ENCODE measurements at regions of chr3 and their contacts with region 1.

Region 1: DNA sequence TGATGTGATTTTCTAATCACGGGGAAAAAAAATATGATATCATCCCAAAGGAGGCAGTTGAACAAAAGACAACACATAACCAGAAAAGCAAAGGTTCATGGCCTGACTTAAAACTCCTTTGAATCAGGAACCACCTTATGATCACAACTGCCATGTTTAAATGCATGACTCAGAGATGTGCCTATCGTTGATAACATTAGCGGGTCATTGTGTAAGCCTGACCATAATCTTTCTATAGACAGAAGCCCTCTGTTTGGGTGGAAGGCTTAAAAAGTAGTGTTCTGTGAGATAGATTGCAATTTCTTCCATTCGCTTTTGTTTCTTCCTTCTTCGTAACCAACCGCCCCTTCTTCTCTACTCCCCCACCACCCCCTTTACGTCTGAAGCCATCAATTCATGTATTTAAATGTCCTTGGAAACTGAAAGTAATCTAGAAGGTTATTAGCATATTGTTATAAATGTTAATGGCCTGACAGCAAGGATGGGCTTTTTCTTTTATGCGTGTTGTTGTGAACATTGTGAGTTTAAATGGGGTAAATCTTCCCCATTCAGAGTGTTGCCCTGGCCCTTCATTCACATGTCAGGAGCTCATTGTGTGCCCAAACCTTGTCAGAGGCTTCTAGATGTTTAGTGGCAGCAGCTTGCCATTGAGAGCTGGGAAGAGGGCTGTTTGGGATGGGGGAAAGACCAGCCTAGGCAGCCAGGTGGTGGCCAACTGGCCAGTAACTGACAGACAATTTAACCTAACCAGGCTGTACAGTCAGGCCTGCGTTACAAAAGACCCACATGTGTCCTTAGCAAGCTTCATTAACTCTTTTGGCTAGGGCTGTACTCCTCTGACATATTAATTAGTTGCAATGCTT is 64.5 kb downstream of the EPHA3 start:
- DNase-seq: no peak
- ATAC-seq: no peak
- H3K4me3 ChIP-seq: no peak overlapping the region
- H3K27ac ChIP-seq: no peak overlapping the region
- H3K4me1 ChIP-seq: no peaks in the 10 kb centered on the region
- H3K27me3 ChIP-seq: no peaks in the 10 kb centered on the region
- CTCF ChIP-seq: no peak
- POLR2A ChIP-seq: no peak

Region 2: DNA sequence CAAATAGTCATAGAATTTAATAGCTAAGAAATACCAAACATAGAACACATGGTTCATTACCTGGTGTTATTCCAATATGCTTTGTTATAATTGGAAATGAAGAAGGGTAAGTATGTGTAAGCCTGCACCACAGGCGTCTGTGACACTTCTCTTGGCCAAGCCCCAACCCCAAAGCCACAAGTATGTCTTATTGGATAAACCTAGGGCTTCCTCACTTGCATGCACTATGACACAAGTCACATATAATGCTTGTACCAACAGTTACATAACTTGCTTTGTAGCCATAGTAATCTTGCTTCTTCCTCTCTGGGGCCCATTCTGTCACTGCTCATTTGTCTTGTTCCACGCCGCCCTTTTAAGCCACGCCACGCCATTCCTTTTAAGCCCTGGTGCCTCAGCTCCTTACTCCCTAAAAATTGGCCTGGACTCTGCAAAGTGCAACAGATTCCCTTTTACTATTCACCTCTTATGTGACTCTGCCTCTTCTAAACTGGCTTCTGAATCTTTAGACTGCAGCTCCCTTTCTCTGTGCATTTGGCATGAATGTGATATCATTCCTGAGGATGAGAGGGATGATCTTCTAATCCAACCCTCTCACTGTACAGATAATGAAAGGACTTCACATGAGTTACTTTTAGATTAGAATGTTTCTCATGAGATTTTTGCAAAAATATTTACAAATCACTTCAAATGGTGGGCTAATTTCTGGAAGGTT is 112.5 kb before region 1 on chr3:
- in situ Hi-C with region 1: loop called in 1 of 4 experiments (anchors 25 kb)
- intact Hi-C with region 1: no loop called
- DNase-seq: no peak
- ATAC-seq: no peak
- H3K4me3 ChIP-seq: no peak overlapping the region
- H3K27ac ChIP-seq: no peak overlapping the region
- H3K4me1 ChIP-seq: no peaks in the 10 kb centered on the region
- H3K27me3 ChIP-seq: no peaks in the 10 kb centered on the region
- CTCF ChIP-seq: no peak
- POLR2A ChIP-seq: no peak

Measured in gastrocnemius medialis (tissue), 4 donors.